ENCODE measurements at regions of chr4 and their contacts with region 1.

Region 1: DNA sequence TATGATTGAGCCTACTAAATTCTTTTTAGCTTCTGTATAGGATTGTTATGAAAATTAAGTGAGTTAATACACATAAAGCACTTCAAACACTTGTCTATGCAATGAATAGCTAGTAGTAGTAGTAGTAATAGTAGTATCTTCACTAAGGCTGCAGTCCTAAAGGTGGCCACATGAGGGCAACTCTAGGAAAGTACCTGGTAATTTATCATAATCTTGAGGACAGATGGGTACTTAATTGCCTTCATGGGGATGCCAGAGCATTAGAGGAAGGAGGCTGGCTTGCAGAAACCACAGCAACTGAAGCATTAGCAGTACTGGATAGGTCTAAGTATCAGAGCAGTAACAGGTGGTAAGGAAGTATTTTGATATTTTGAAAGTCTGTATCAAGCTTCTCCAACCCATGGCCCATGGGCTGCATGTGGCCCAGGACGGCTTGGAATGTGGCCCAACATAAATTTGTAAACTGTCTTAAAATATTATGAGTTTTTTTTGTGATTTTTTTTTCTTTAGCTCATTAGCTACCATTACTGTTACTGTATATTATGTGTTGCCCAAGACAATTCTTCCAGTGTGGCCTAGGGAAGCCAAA is 17.3 kb downstream of the NIPAL1 start:
- DNase-seq: peak; percentile 36
- H3K27ac ChIP-seq: no peak overlapping the region
- CTCF ChIP-seq: peak; percentile 55

Region 2: GRCh38 chr4:48085821-48086607 is 52.1 kb after region 1 on chr4:
- CTCF ChIA-PET with region 1: interaction called, 12 read pairs
- POLR2A ChIA-PET with region 1: no interaction called
- DNase-seq: no peak
- H3K27ac ChIP-seq: no peak overlapping the region
- CTCF ChIP-seq: no peak